Dendritic cell treated with granulocyte-macrophage colony-stimulating factor and Interleukin-4, amounts not matched to agents 40 ng/mL and 50 ng/mL, for 4 days (primary cell): ENCODE measurements at regions of chr19 and their contacts with region 1.

Region 1: DNA sequence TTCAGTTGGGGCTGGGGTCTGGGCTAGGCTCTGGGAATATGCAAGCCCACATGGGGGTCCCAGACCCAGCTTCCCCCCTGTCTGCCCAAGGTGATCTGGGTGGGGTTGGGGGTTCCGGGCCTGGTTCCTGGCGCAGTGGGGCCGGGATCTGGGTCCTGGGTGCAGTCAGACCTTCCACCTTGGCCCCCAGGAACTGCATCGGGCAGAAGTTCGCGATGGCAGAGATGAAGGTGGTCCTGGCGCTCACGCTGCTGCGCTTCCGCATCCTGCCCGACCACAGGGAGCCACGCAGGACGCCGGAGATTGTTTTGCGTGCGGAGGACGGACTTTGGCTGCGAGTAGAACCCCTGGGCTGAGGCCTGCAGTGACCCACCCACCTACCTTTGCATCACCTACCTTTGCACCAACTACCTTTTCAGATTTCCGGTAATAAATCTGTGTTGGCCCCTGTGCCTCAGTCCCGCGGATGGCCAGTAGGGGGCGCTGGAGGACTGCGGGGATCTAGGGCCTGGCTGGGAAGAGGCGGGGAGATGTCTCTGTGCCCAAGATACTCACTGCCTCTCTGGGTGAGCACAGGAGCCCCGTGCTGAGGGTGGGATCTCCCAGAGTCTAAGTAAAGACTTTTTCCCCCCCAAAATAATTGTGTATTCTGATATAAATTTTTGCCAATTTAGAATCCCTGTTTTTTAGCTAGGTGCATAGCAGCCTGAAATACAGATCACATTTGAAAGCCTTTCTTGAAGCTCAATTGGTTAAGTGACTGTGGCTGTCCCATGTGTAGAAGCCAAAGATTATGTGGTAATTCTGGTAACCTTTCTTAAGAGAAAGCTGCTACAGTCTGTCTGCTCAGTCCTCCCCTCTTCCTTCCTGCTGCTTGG is 11.5 kb upstream of the CYP4F3 start:
- H3K4me3 Mint-ChIP-seq: no peak overlapping the region
- H3K27ac Mint-ChIP-seq: no peak overlapping the region
- H3K4me1 Mint-ChIP-seq: peaks cover 10% of the 10 kb centered on the region
- H3K27me3 Mint-ChIP-seq: peaks cover 14% of the 10 kb centered on the region

Region 2: GRCh38 chr19:15672580-15673175 is 43.4 kb after region 1 on chr19 and contains the start of gene CYP4F12:
- intact Hi-C with region 1: no loop called
- H3K4me3 Mint-ChIP-seq: no peak within 1 kb of the TSS
- H3K27ac Mint-ChIP-seq: no peak within 1 kb of the TSS
- H3K4me1 Mint-ChIP-seq: peaks cover 17% of the 10 kb centered on the region
- H3K27me3 Mint-ChIP-seq: peaks cover 18% of the 10 kb centered on the region

Region 3: DNA sequence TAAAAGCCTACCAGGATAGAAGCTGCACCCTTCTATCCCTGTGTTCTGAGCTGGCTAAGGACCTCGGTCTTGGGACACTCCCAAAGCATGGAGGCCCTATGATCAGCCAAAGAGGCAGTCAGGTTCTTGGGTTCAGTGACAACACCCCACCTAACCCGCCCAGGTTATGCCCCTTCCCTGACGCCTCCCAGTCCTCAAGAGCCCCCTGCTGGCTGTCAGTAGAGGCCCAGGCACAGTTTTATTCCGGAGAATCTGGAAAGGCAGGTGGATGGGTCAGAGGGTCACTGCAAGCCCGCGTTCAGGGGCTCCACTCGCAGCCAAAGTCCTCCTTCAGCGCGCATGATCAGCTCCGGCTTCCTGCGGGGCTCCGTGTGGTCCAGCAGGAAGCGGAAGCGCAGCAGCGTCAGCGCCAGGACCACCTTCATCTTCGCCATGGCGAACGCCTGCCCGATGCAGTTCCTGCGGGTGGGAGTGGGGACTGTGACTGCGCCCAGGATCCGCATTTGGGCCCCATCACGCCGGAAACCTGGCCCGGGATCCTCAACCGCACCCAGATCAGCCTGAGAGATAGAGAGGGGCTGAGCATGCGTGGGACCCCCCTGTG is 130.8 kb after region 1 on chr19:
- intact Hi-C with region 1: loop called (anchors 10 kb)
- H3K4me3 Mint-ChIP-seq: no peak overlapping the region
- H3K27ac Mint-ChIP-seq: no peak overlapping the region
- H3K4me1 Mint-ChIP-seq: no peaks in the 10 kb centered on the region
- H3K27me3 Mint-ChIP-seq: peaks cover 49% of the 10 kb centered on the region

Region 4: DNA sequence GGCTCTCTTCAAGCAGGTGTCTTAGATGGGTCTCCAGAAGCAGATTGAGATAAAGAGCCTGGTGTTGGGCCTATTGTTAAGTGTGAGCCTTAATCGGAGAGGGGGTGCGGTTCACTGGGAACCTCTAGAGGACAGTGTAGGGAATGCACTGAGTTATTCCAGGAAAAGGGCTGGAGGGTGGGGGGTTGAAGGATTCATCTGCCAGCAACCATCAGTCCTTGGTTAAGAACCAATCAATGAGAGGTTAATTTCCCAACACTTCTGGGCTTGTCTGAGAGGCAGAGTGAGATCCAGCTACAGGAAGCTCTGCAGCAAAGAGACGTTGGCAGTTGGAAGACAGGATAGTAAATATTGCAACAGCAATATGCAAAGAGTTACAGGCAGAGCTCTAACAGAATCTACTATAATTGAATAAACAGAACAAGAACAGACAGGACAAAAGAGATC is 239.9 kb after region 1 on chr19:
- intact Hi-C with region 1: loop called (anchors 2 kb)
- H3K4me3 Mint-ChIP-seq: no peak overlapping the region
- H3K27ac Mint-ChIP-seq: no peak overlapping the region
- H3K4me1 Mint-ChIP-seq: peaks cover 33% of the 10 kb centered on the region
- H3K27me3 Mint-ChIP-seq: no peaks in the 10 kb centered on the region

Region 5: DNA sequence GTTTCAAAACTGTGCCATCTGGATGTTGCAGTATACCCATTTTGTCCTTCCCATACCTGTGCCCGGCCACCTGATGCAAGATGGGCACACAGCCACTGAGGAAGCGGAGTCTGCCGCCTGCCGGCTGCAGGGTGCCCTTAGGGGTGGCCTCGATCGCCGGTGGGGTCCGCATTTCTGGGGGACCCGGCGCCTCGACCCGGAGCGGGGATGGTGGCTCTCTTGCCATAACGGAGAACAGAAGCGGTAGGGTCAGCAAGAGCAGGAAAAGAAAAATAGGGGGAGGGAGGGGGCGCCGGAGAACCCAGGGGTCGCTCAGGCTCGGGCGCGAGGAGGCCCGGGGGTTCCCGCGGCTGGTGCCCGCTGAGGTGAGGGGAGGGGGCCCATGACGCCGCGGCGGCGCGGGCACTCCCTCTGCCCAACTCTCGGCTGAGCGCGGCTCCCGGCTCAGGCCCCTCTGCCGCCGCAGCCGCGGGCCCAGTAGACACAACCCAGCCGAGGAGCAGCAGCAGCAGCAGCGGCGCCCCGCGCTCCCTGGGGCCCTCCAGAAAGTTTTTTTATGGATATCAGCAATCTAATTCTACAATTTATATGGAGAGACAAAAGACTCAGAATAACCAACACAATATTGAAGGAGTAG is 282.5 kb after region 1 on chr19:
- intact Hi-C with region 1: no loop called
- H3K4me3 Mint-ChIP-seq: peak overlapping the region; percentile 64
- H3K27ac Mint-ChIP-seq: no peak overlapping the region
- H3K4me1 Mint-ChIP-seq: peaks cover 20% of the 10 kb centered on the region
- H3K27me3 Mint-ChIP-seq: peaks cover 16% of the 10 kb centered on the region

Region 6: GRCh38 chr19:16041299-16041990 is 412.2 kb after region 1 on chr19:
- intact Hi-C with region 1: loop called (anchors 5 kb)
- H3K4me3 Mint-ChIP-seq: peak overlapping the region; percentile 6
- H3K27ac Mint-ChIP-seq: no peak overlapping the region
- H3K4me1 Mint-ChIP-seq: peaks cover 8% of the 10 kb centered on the region
- H3K27me3 Mint-ChIP-seq: peaks cover 6% of the 10 kb centered on the region